CD8-positive, alpha-beta T cell (primary cell): ENCODE measurements at regions of chr6 and their contacts with region 1.

Region 1: GRCh38 chr6:105484238-105485161 is 81.6 kb upstream of the PREP start:
- DNase-seq: peak in 2 of 9 experiments; percentile 56 to 64
- ATAC-seq: peak; percentile 50
- H3K4me3 ChIP-seq: no peak overlapping the region
- H3K4me3 Mint-ChIP-seq: peak overlapping the region; percentile 60
- H3K27ac ChIP-seq: peak overlapping the region in 1 of 2 experiments; percentile 18
- H3K27ac Mint-ChIP-seq: peak overlapping the region; percentile 86
- H3K4me1 ChIP-seq: no peaks in the 10 kb centered on the region
- H3K4me1 Mint-ChIP-seq: peaks cover 24% of the 10 kb centered on the region
- H3K27me3 ChIP-seq: no peaks in the 10 kb centered on the region
- H3K27me3 Mint-ChIP-seq: peaks cover 2% of the 10 kb centered on the region
- CTCF ChIP-seq: peak; percentile 85

Region 2: GRCh38 chr6:105424175-105424783 is 60.2 kb before region 1 on chr6:
- CTCF ChIA-PET with region 1: no interaction called
- POLR2A ChIA-PET with region 1: no interaction called
- intact Hi-C with region 1: no loop called
- DNase-seq: peak; percentile 48 to 77 (median 68)
- ATAC-seq: peak; percentile 85
- H3K4me3 ChIP-seq: no peak overlapping the region
- H3K4me3 Mint-ChIP-seq: no peak overlapping the region
- H3K27ac ChIP-seq: no peak overlapping the region
- H3K27ac Mint-ChIP-seq: no peak overlapping the region
- H3K4me1 ChIP-seq: no peaks in the 10 kb centered on the region
- H3K4me1 Mint-ChIP-seq: no peaks in the 10 kb centered on the region
- H3K27me3 ChIP-seq: no peaks in the 10 kb centered on the region
- H3K27me3 Mint-ChIP-seq: peaks cover 5% of the 10 kb centered on the region
- CTCF ChIP-seq: peak; percentile 86

Region 3: DNA sequence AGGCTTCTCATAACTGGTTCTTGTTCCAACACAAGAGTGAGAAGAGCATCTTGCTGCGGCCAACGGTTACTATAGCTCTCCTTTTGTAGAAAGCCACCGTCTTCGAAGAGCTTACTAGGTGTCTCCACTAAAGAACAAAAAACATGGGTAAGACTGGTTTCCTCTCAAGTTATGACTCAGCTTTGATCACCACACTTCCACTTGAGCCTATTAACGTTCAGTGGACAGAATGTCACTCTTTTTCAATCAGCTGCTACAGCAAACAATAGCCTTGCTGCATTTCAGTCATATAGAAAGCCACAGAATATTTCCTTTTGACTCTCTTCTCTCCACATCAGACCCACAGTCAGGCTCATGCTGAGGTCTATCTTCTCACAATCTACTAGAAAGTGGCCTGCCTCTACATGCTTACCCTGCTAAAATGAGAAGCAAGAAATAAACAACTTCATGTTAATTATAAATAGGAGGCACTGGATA is 161.9 kb after region 1 on chr6:
- CTCF ChIA-PET with region 1: no interaction called
- POLR2A ChIA-PET with region 1: interaction called, 3 read pairs
- intact Hi-C with region 1: loop called in 1 of 2 experiments (anchors 10 kb)
- DNase-seq: peak in 6 of 9 experiments; percentile 13 to 88 (median 34)
- ATAC-seq: peak; percentile 76
- H3K4me3 ChIP-seq: no peak overlapping the region
- H3K4me3 Mint-ChIP-seq: no peak overlapping the region
- H3K27ac ChIP-seq: peak overlapping the region in 1 of 2 experiments; percentile 70
- H3K27ac Mint-ChIP-seq: peak overlapping the region; percentile 58
- H3K4me1 ChIP-seq: peaks cover 26% of the 10 kb centered on the region
- H3K4me1 Mint-ChIP-seq: peaks cover 62% of the 10 kb centered on the region
- H3K27me3 ChIP-seq: no peaks in the 10 kb centered on the region
- H3K27me3 Mint-ChIP-seq: peaks cover 2% of the 10 kb centered on the region
- CTCF ChIP-seq: no peak

Region 4: DNA sequence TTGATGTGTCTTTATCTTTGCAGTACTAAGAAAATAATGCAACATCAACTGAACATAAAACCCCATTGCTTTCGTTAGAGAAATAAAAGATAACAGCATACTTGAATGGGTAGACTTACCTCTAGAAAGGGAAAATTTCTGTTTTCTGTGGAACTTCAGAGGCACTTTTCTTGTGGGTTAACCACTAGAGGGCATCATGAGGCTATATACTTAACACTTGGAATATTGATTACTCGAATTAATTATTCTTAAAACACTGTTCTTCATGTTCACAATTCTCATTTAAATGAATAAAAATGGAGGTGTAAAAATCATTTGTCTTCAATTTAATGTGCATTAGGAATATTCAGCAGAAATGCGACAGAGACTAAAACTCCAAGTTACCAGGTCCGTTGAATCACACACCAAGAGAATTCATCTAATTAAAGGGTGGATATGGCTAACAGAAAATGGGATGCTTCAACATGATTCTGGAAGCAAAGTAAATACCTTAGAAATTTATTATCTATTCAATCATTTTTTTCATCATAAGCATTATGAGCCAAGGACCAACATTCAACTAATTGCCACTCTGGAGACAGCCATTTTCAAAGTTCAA is 249.2 kb after region 1 on chr6:
- CTCF ChIA-PET with region 1: interaction called, 4 read pairs
- POLR2A ChIA-PET with region 1: no interaction called
- intact Hi-C with region 1: loop called (anchors 2 to 5 kb)
- DNase-seq: peak in 2 of 9 experiments; percentile 53 to 64
- ATAC-seq: no peak
- H3K4me3 ChIP-seq: no peak overlapping the region
- H3K4me3 Mint-ChIP-seq: no peak overlapping the region
- H3K27ac ChIP-seq: no peak overlapping the region
- H3K27ac Mint-ChIP-seq: no peak overlapping the region
- H3K4me1 ChIP-seq: no peaks in the 10 kb centered on the region
- H3K4me1 Mint-ChIP-seq: peaks cover 7% of the 10 kb centered on the region
- H3K27me3 ChIP-seq: no peaks in the 10 kb centered on the region
- H3K27me3 Mint-ChIP-seq: no peaks in the 10 kb centered on the region
- CTCF ChIP-seq: peak; percentile 73

Region 5: DNA sequence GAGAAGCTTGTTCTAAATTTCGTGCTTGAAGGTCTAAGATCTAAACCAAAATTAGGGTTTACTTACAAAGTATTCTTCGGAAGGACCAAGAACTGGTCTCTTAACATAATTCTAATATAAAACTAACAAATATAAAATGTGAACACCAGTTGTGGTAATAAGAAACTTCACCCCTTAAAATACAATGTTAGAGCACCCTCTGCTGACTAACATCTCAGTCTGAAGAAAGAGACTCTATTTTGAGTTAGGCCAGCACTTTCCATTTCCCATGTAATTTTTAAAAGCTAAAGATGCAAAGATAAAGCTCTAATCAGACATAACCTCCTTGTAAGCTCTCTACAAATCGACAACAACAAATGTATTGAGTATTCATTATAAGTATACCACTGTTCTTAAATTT is 816.4 kb after region 1 on chr6:
- CTCF ChIA-PET with region 1: no interaction called
- POLR2A ChIA-PET with region 1: no interaction called
- intact Hi-C with region 1: loop called (anchors 2 kb)
- DNase-seq: peak in 2 of 9 experiments; percentile 41 to 55
- ATAC-seq: no peak
- H3K4me3 ChIP-seq: no peak overlapping the region
- H3K4me3 Mint-ChIP-seq: no peak overlapping the region
- H3K27ac ChIP-seq: no peak overlapping the region
- H3K27ac Mint-ChIP-seq: no peak overlapping the region
- H3K4me1 ChIP-seq: no peaks in the 10 kb centered on the region
- H3K4me1 Mint-ChIP-seq: peaks cover 14% of the 10 kb centered on the region
- H3K27me3 ChIP-seq: no peaks in the 10 kb centered on the region
- H3K27me3 Mint-ChIP-seq: no peaks in the 10 kb centered on the region
- CTCF ChIP-seq: peak; percentile 40

Region 6: DNA sequence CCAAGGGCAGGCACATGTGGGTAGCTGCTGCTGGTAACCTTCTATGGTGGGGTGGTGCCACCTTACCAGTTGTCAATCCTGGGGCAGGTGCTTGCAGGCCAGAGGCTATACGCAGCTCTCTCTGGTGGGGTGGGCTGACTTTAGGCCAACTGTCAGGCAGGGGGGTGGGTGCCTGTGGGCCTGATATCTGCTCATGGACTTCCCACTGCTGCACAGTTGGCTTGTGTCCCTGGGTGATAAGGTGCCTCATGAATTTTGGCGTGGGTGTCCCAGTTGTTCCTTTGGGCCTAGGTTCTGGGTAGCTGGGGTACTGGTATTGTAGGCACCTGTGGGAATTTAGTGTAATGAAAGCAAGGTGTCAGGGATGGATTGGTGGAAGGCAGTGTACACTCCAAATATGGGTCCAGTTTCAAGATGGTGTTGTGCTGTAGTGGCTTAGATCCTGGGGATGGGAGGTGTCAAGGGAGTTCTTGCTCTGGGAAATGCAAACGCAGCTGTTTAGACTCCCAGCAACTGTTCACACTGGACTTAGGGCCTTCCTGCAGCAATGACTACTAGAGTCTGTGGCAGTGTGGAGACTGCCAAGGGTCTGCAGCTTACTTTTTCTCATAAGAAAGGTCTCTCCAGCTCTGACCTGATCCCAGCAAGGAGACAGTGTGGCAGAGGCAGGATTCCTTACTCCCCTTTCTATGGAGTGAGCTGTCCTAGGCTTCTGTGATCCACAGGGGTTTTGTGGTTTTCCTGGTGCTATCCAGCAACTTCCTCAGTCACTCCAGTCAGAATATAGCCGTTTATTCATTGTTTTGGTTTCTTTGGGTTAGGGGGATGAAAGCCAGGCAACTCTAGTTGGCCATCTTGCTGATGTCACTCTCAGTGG is 1004.2 kb after region 1 on chr6:
- CTCF ChIA-PET with region 1: no interaction called
- POLR2A ChIA-PET with region 1: no interaction called
- intact Hi-C with region 1: no loop called
- DNase-seq: no peak
- ATAC-seq: no peak
- H3K4me3 ChIP-seq: no peak overlapping the region
- H3K4me3 Mint-ChIP-seq: no peak overlapping the region
- H3K27ac ChIP-seq: no peak overlapping the region
- H3K27ac Mint-ChIP-seq: no peak overlapping the region
- H3K4me1 ChIP-seq: no peaks in the 10 kb centered on the region
- H3K4me1 Mint-ChIP-seq: no peaks in the 10 kb centered on the region
- H3K27me3 ChIP-seq: no peaks in the 10 kb centered on the region
- H3K27me3 Mint-ChIP-seq: no peaks in the 10 kb centered on the region
- CTCF ChIP-seq: no peak